HCT116 (cell line): ENCODE measurements at regions of chr12 and their contacts with region 1.

Region 1: DNA sequence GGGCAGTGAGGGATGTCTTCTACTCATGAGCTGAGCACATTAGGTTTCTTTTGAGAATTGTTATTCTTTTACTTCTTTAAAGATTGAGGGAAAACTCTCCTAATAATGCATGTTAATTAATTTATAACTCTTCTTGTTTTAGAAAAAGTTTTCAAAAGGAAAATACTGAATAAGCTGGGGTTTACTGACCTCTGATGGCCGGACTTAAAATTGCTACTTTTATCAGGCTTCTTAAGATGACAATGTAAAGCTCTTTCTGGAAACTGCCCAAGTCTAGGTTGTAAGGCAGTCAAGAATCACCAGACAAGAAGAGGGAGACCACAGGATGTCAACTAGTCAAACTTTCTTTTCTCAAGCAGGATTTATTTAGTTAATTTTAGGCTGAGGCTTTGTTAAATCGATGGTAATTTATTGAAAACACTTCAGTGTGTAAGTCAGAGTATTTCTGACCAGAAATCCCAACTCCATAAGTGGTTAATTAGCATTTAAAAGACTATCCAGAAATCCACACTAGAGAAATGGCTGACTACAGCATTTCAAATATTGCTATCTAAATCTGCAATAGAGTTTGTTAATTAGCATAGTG is 82.1 kb downstream of the AVPR1A start:
- DNase-seq: peak; percentile 55
- ATAC-seq: peak; percentile 71; the same call in 1 of the 2 replicates
- H3K4me3 ChIP-seq: no peak overlapping the region
- H3K27ac ChIP-seq: no peak overlapping the region
- H3K4me1 ChIP-seq: no peaks in the 10 kb centered on the region
- H3K27me3 ChIP-seq: no peaks in the 10 kb centered on the region
- CTCF ChIP-seq: peak; percentile 50 to 66 (median 65); a peak in 5 of 6 replicates
- POLR2A ChIP-seq: no peak
- RAD21 ChIP-seq: peak; percentile 81

Region 2: GRCh38 chr12:62210422-62210821 is 858.5 kb before region 1 on chr12:
- CTCF ChIA-PET with region 1: no interaction called
- POLR2A ChIA-PET with region 1: no interaction called
- RAD21 ChIA-PET with region 1: no interaction called
- intact Hi-C with region 1: no loop called
- DNase-seq: peak; percentile 37
- ATAC-seq: peak; percentile 71
- H3K4me3 ChIP-seq: no peak overlapping the region
- H3K27ac ChIP-seq: no peak overlapping the region
- H3K4me1 ChIP-seq: peaks cover 0 to 3% of the 10 kb centered on the region in 2 experiments; a peak in 1 of 4 replicates
- H3K27me3 ChIP-seq: no peaks in the 10 kb centered on the region
- CTCF ChIP-seq: peak; percentile 41 to 87 (median 85); a peak in 5 of 6 replicates
- POLR2A ChIP-seq: no peak
- RAD21 ChIP-seq: peak; percentile 65

Region 3: GRCh38 chr12:62379026-62379722 is 689.8 kb before region 1 on chr12:
- CTCF ChIA-PET with region 1: no interaction called
- POLR2A ChIA-PET with region 1: no interaction called
- RAD21 ChIA-PET with region 1: no interaction called
- intact Hi-C with region 1: no loop called
- DNase-seq: no peak
- ATAC-seq: no peak
- H3K4me3 ChIP-seq: no peak overlapping the region
- H3K27ac ChIP-seq: no peak overlapping the region
- H3K4me1 ChIP-seq: no peaks in the 10 kb centered on the region
- H3K27me3 ChIP-seq: no peaks in the 10 kb centered on the region
- CTCF ChIP-seq: no peak
- POLR2A ChIP-seq: no peak
- RAD21 ChIP-seq: no peak

Region 4: GRCh38 chr12:62435303-62436163 is 633.4 kb before region 1 on chr12:
- CTCF ChIA-PET with region 1: interaction called, 18 read pairs
- POLR2A ChIA-PET with region 1: no interaction called
- RAD21 ChIA-PET with region 1: no interaction called
- intact Hi-C with region 1: loop called (anchors 2 kb)
- DNase-seq: no peak
- ATAC-seq: no peak
- H3K4me3 ChIP-seq: no peak overlapping the region
- H3K27ac ChIP-seq: no peak overlapping the region
- H3K4me1 ChIP-seq: no peaks in the 10 kb centered on the region
- H3K27me3 ChIP-seq: no peaks in the 10 kb centered on the region
- CTCF ChIP-seq: no peak
- POLR2A ChIP-seq: no peak
- RAD21 ChIP-seq: no peak

Region 5: DNA sequence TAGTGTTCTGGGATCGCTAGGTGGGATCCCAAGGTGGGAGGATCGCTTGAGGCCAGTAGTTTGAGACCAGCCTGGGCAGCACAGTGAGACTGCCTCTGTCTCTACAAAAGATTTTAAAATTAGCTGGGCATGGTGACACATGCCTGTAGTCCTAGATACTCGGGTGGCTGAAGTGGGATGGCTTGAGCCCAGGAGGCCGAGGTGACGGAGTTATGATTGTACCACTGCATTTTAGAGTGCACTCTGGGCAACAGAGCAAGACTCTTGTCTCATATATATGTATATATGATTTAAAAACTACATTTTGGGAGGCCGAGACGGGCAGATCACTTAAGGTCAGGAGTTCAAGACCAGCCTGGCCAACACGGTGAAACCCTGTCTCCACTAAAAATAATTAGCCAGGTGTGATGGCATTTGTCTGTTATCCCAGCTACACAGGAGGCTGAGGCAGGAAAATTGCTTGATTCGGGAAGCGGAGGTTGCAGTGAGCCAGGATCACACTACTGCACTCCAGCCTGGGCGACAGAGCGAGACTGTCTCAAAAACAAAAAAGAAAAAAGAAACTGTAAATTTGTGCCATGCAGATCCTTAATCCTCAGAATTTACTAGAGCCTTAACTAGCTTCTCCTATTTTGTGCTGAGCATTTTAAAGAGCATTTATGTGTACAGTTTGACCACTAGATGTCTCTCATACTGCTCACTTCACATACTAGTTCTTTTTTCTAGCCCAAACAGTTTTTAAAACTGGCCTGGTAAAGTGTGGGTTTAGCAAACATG is 487.5 kb before region 1 on chr12:
- CTCF ChIA-PET with region 1: interaction called, 4 read pairs
- POLR2A ChIA-PET with region 1: no interaction called
- RAD21 ChIA-PET with region 1: interaction called, 3 read pairs
- intact Hi-C with region 1: loop called (anchors 10 kb)
- DNase-seq: peak; percentile 38
- ATAC-seq: peak; percentile 84
- H3K4me3 ChIP-seq: no peak overlapping the region
- H3K27ac ChIP-seq: no peak overlapping the region
- H3K4me1 ChIP-seq: no peaks in the 10 kb centered on the region
- H3K27me3 ChIP-seq: no peaks in the 10 kb centered on the region
- CTCF ChIP-seq: peak; percentile 67 to 73 (median 73); a peak in 5 of 6 replicates
- POLR2A ChIP-seq: no peak
- RAD21 ChIP-seq: peak; percentile 79

Region 6: GRCh38 chr12:62793256-62794217 is 275.4 kb before region 1 on chr12:
- CTCF ChIA-PET with region 1: interaction called, 40 read pairs
- POLR2A ChIA-PET with region 1: no interaction called
- RAD21 ChIA-PET with region 1: interaction called in 1 of 2 experiments, 3 read pairs
- intact Hi-C with region 1: loop called (anchors 2 kb)
- DNase-seq: peak; percentile 60
- ATAC-seq: peak; percentile 78
- H3K4me3 ChIP-seq: no peak overlapping the region
- H3K27ac ChIP-seq: no peak overlapping the region
- H3K4me1 ChIP-seq: peaks cover 2 to 9% of the 10 kb centered on the region in 2 experiments; a peak in 2 of 4 replicates
- H3K27me3 ChIP-seq: no peaks in the 10 kb centered on the region
- CTCF ChIP-seq: peak; percentile 87 to 94 (median 91)
- POLR2A ChIP-seq: no peak
- RAD21 ChIP-seq: peak; percentile 98

Region 7: GRCh38 chr12:62799126-62799736 is 269.7 kb before region 1 on chr12:
- CTCF ChIA-PET with region 1: interaction called, 40 read pairs
- POLR2A ChIA-PET with region 1: no interaction called
- RAD21 ChIA-PET with region 1: interaction called in 1 of 2 experiments, 3 read pairs
- intact Hi-C with region 1: loop called (anchors 2 kb)
- DNase-seq: peak; percentile 48
- ATAC-seq: peak; percentile 90
- H3K4me3 ChIP-seq: no peak overlapping the region
- H3K27ac ChIP-seq: no peak overlapping the region
- H3K4me1 ChIP-seq: peaks cover 0 to 3% of the 10 kb centered on the region in 2 experiments; a peak in 1 of 4 replicates
- H3K27me3 ChIP-seq: no peaks in the 10 kb centered on the region
- CTCF ChIP-seq: peak; percentile 82 to 96 (median 88)
- POLR2A ChIP-seq: no peak
- RAD21 ChIP-seq: peak; percentile 91

Region 8: GRCh38 chr12:62813031-62813829 is 255.7 kb before region 1 on chr12:
- CTCF ChIA-PET with region 1: interaction called, 36 read pairs
- POLR2A ChIA-PET with region 1: no interaction called
- RAD21 ChIA-PET with region 1: interaction called in 1 of 2 experiments, 3 read pairs
- intact Hi-C with region 1: loop called (anchors 5 kb)
- DNase-seq: peak; percentile 45
- ATAC-seq: peak; percentile 92
- H3K4me3 ChIP-seq: 0 out of 4 replicates have a peak overlapping the region, but pooled peaks of 1 of the 2 experiments have one; percentile 9
- H3K27ac ChIP-seq: no peak overlapping the region
- H3K4me1 ChIP-seq: peaks cover 0 to 6% of the 10 kb centered on the region in 2 experiments; a peak in 1 of 4 replicates
- H3K27me3 ChIP-seq: no peaks in the 10 kb centered on the region
- CTCF ChIP-seq: peak; percentile 54 to 82 (median 75); a peak in 5 of 6 replicates
- POLR2A ChIP-seq: no peak
- RAD21 ChIP-seq: peak; percentile 76

Region 9: DNA sequence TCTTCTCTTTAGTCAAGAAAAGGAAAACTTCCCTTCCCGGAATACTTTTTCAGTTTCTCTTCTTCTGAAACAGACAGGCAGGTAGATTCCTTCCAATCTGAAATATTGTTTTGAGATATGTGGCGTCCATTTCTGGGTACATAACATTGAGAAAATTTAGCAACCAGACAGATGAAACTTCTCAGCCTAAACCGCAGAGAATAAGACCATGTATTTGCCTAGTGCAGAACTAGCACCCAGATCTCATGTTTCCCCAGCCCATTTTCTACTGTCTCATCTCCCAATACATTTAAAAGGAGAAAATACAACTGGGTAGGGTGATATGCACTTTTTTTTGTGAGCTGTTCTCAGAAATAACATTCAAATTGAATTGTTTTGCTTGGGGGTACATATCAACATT is 75.6 kb after region 1 on chr12:
- CTCF ChIA-PET with region 1: no interaction called
- POLR2A ChIA-PET with region 1: no interaction called
- RAD21 ChIA-PET with region 1: no interaction called
- intact Hi-C with region 1: no loop called
- DNase-seq: no peak
- ATAC-seq: no peak
- H3K4me3 ChIP-seq: no peak overlapping the region
- H3K27ac ChIP-seq: no peak overlapping the region
- H3K4me1 ChIP-seq: no peaks in the 10 kb centered on the region
- H3K27me3 ChIP-seq: no peaks in the 10 kb centered on the region
- CTCF ChIP-seq: no peak
- POLR2A ChIP-seq: no peak
- RAD21 ChIP-seq: no peak

Region 10: GRCh38 chr12:63302269-63302940 is 233.5 kb after region 1 on chr12:
- CTCF ChIA-PET with region 1: no interaction called
- POLR2A ChIA-PET with region 1: no interaction called
- RAD21 ChIA-PET with region 1: no interaction called
- intact Hi-C with region 1: no loop called
- DNase-seq: no peak
- ATAC-seq: no peak
- H3K4me3 ChIP-seq: no peak overlapping the region
- H3K27ac ChIP-seq: no peak overlapping the region
- H3K4me1 ChIP-seq: no peaks in the 10 kb centered on the region
- H3K27me3 ChIP-seq: no peaks in the 10 kb centered on the region
- CTCF ChIP-seq: no peak
- POLR2A ChIP-seq: no peak
- RAD21 ChIP-seq: no peak